Psoas muscle (tissue), 8 donors: ENCODE measurements at regions of chr4 and their contacts with region 1.

Region 1: DNA sequence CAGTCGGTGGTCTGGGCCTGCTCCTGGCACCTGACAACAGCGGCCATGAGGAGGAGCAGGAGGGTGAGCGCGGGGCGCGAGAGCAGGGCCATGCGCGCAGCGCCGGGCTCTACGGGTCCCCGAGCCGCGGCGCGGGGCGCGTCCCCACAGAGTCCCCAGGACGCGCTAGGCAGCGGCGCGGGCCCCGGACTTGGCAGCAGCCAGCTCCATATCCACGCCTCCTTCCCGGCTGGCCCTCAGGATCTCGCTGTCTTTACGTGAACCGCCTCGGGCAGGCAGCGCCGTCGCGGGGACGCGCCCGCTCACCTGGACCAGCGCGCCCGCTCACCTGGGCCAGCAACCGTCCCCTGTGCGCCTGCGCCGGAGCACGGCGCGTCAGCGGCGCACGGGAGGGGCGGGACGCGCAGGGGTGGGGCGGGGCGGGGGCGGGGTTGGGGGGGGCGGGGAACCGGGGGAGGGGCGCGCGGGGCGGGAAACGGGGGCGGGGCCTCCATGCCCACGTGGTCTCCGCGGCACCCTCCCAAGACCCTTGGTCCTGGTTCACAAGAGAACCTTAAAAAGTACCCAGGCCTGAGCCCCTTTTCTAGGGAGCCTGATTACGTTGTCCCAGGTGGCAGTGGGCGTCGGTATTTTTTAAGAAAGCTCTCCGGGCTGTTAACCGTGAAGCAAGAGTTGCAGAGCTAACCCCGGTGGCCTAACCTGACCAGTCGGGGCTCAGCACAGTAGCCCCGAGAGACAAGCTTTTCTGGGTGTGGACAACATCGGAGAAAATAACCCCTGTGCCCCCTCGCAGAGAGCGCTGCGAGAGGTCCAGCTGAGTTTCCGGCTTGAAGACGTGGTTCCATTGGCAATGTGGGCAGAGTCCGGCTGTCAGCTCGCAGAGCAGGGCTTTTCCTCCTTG is at the start of gene PLA2G12A:
- DNase-seq: peak; percentile 59 to 82
- ATAC-seq: peak; percentile 95 to 96 (median 96)
- H3K4me3 ChIP-seq: peak within 1 kb of the TSS; percentile 91
- H3K27ac ChIP-seq: peak within 1 kb of the TSS; percentile 94
- H3K4me1 ChIP-seq: peaks cover 10% of the 10 kb centered on the region
- H3K27me3 ChIP-seq: no peaks in the 10 kb centered on the region
- CTCF ChIP-seq: no peak
- total RNA-seq, gene PLA2G12A: 31.9 to 52.5 (median 40.6) TPM

Region 2: GRCh38 chr4:109815151-109816081 is 85.4 kb after region 1 on chr4 and contains the start of gene GAR1:
- intact Hi-C with region 1: loop called in 1 of 2 experiments (anchors 2 kb)
- DNase-seq: peak; percentile 87 to 93
- ATAC-seq: peak; percentile 99 to 100 (median 100)
- H3K4me3 ChIP-seq: peak within 1 kb of the TSS; percentile 92
- H3K27ac ChIP-seq: peak within 1 kb of the TSS; percentile 92
- H3K4me1 ChIP-seq: peaks cover 10% of the 10 kb centered on the region
- H3K27me3 ChIP-seq: no peaks in the 10 kb centered on the region
- CTCF ChIP-seq: no peak
- total RNA-seq, gene GAR1: 7.7 to 17.9 (median 11.3) TPM